ENCODE measurements at regions of chr16 and their contacts with region 1.

Region 1: DNA sequence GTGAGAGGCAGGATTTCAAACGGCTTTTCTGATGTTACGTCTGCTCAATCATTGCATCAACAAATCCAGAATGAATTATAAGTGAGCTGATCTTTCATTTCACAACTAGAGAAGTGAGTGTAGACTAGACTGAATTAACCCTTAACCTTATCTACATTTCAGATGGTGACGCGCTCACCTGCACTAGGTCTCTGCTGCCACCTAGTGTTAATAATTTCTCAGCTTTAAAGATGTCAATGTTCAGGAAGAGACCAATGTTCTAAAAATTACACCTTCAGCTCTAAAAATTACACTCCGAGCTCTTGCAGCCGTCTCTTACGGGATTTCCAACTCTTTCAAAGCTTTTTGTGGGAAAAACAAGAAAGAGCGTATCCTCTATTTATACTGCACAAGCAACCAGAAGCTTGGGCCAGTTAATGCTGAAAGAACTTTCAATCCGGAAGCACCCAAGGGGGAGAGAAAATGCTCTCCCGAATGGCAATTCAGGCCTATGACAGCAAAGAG is 88.2 kb upstream of the FA2H start:
- DNase-seq: no peak
- H3K4me3 ChIP-seq: no peak overlapping the region
- H3K27ac ChIP-seq: no peak overlapping the region
- H3K27me3 ChIP-seq: peaks cover 2% of the 10 kb centered on the region
- CTCF ChIP-seq: peak; percentile 80

Region 2: DNA sequence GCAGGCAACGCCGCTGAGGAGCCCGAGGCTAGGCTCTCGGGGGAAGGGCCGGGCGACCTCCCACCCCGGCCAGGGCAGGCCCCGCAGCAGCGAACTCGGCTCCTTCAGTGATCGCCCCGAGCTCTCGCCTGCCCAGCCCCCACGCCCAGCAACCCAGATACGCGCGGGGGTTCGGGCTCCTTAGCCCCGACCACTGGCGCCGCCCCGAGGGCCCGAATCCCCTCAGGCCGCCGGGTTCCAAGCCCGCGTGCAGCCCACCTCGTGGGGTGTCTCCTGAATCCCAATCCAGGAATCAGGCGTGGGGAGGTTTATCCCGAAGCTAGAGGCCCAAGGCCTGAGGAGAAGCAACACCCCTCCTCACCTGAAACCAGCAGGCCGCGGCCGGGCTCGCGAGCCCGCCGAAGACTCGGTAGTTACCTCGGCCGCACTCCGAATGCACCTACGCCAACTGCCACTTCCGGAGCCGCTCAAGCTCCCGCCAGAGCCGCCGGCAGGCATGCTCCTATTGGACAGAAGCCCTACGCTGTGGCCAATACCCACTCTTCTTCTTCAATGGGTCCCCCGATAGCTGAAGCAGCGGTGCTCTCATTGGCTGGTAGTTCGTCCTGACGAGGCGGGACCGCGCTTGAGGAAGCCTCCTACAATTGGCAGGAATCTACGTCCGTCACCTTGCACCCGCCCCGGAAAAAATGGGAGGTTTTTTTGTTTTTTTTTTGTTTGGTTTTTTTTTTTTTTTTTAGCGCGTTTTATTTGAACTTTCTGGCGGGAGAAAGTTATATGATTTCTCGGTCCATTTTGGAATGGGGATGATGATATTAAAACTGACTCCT is 196.2 kb before region 1 on chr16 and contains the start of gene RFWD3:
- CTCF ChIA-PET with region 1: interaction called, 15 read pairs
- POLR2A ChIA-PET with region 1: no interaction called
- DNase-seq: peak; percentile 96
- H3K4me3 ChIP-seq: peak within 1 kb of the TSS; percentile 87
- H3K27ac ChIP-seq: peak within 1 kb of the TSS; percentile 73
- H3K27me3 ChIP-seq: no peaks in the 10 kb centered on the region
- CTCF ChIP-seq: no peak
- polyA plus RNA-seq, gene RFWD3: 10.7 and 13.4 TPM in 2 replicates

Region 3: GRCh38 chr16:74724820-74725549 is 137.8 kb before region 1 on chr16:
- CTCF ChIA-PET with region 1: interaction called, 19 read pairs
- POLR2A ChIA-PET with region 1: no interaction called
- DNase-seq: peak; percentile 44
- H3K4me3 ChIP-seq: no peak overlapping the region
- H3K27ac ChIP-seq: peak overlapping the region; percentile 11
- H3K27me3 ChIP-seq: no peaks in the 10 kb centered on the region
- CTCF ChIP-seq: peak; percentile 54

Region 4: DNA sequence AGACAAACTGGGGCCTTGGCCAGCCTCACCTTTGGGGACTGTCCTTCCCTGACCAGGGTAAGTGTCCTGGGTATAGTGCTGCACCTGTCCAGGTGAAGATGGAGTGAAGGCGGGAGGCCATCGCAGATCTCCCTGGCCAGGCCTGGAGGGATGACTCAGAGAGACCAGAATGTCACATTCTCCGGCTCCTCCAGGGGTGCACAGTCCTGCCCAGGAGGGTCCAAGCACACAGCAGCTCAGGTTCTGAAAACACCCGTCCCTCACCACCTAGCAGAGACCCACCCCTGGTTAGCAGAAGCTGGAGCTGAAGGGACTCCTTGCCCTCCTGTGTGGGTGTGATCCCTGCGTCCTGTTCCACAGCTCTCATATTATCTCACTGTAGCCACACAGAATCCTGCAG is 110.0 kb before region 1 on chr16:
- CTCF ChIA-PET with region 1: no interaction called
- POLR2A ChIA-PET with region 1: no interaction called
- DNase-seq: no peak
- H3K4me3 ChIP-seq: no peak overlapping the region
- H3K27ac ChIP-seq: no peak overlapping the region
- H3K27me3 ChIP-seq: peaks cover 17% of the 10 kb centered on the region
- CTCF ChIP-seq: no peak

Region 5: GRCh38 chr16:74785031-74785430 is 77.8 kb before region 1 on chr16:
- CTCF ChIA-PET with region 1: interaction called, 13 read pairs
- POLR2A ChIA-PET with region 1: no interaction called
- DNase-seq: no peak
- H3K4me3 ChIP-seq: no peak overlapping the region
- H3K27ac ChIP-seq: no peak overlapping the region
- H3K27me3 ChIP-seq: peaks cover 7% of the 10 kb centered on the region
- CTCF ChIP-seq: no peak

Region 6: DNA sequence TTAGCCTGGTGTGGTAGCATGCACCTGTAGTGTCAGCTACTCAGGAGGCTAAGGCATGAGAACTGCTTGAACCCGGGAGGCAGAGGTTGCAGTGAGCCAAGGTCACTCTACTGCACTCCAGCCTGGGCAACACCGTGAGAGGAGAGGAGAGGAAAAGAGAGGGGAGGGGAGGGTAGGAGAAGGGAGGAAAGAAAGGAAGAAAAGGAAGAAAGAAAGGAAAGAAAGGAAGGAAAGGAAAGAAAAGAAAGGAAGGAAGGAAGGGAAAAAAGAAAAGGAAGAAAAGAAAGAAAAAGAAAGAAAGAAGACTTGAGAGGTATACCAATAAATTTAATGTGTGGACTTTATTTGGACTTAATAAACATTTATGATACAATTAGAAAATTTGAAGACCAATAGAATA is 21.3 kb before region 1 on chr16:
- CTCF ChIA-PET with region 1: interaction called, 20 read pairs
- POLR2A ChIA-PET with region 1: no interaction called
- DNase-seq: no peak
- H3K4me3 ChIP-seq: no peak overlapping the region
- H3K27ac ChIP-seq: no peak overlapping the region
- H3K27me3 ChIP-seq: peaks cover 2% of the 10 kb centered on the region
- CTCF ChIP-seq: no peak

Region 7: DNA sequence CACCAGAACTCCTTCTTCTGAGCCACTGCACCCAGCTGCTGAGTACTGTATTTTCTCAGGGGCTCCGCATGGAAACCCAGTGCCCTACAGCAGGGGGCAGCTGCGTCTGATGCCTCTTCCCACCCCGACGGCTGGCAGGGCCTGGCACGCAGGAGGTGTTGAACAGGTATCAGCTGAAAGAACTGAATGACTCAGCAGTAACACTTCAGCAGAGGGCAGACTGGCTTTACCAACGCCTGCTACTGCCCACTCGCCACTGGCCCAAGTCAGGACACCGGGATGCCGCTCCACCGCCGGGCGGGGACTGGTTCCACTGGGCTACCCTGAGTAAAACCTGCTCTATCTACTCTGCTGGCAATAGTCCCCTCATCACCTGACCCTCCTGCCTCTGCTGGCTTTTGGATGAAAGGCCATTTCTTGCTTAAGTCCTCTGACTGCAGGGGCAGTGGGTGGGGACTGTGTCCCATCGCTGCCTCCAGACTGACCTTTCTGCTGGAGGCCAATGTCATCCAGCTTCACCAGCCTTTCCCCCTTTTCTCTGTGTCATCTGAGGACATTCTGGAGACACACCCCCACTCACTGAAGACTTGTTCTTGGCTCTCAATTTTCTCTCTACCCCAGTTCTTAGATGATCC is 12.2 kb after region 1 on chr16:
- CTCF ChIA-PET with region 1: interaction called, 43 read pairs
- POLR2A ChIA-PET with region 1: no interaction called
- DNase-seq: no peak
- H3K4me3 ChIP-seq: no peak overlapping the region
- H3K27ac ChIP-seq: no peak overlapping the region
- H3K27me3 ChIP-seq: no peaks in the 10 kb centered on the region
- CTCF ChIP-seq: no peak

Region 8: GRCh38 chr16:75110637-75111513 is 248.1 kb after region 1 on chr16:
- CTCF ChIA-PET with region 1: interaction called, 18 read pairs
- POLR2A ChIA-PET with region 1: no interaction called
- DNase-seq: peak; percentile 72
- H3K4me3 ChIP-seq: peak overlapping the region; percentile 45
- H3K27ac ChIP-seq: peak overlapping the region; percentile 84
- H3K27me3 ChIP-seq: no peaks in the 10 kb centered on the region
- CTCF ChIP-seq: peak; percentile 90